ENCODE measurements at regions of chr6 and their contacts with region 1.

Region 1: DNA sequence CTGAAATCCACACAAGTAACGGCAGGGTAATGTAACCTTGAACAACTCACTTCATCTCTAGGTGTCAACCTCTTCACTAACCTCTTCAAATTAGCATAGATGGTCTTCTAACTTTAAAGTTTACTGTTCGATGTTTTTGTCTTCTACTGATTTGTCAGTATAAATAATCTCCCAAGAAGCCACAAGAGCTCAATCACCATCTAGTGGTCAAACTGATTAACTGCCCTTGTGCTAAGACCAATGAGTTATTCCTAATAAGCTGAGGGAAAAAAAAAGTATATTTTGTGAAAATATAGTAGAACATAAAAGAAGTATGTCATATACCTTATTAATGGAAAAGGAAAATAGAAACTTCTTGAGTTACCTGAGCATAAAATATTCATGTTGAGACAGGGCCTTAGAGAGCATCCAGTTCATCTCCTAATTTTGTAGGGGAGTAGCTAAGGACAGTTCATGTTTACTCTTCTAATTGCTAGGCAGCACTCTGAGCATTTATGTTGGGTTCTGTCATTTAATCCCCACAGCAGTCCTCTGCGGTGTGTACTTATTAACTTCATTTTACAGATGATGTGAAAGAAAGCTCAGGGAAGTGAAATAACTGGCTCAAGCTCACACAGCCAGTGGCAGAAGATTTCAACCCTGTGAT is 317.1 kb downstream of the ESR1 start:
- DNase-seq: no peak
- H3K4me3 ChIP-seq: no peak overlapping the region
- CTCF ChIP-seq: peak; percentile 58

Region 2: GRCh38 chr6:151958331-151958730 is 166.2 kb before region 1 on chr6:
- CTCF ChIA-PET with region 1: interaction called, 10 read pairs
- POLR2A ChIA-PET with region 1: no interaction called
- DNase-seq: no peak
- H3K4me3 ChIP-seq: no peak overlapping the region
- CTCF ChIP-seq: no peak

Region 3: GRCh38 chr6:152136453-152136825 is 11.9 kb after region 1 on chr6:
- CTCF ChIA-PET with region 1: interaction called, 13 read pairs
- POLR2A ChIA-PET with region 1: no interaction called
- DNase-seq: no peak
- H3K4me3 ChIP-seq: no peak overlapping the region
- CTCF ChIP-seq: no peak

Region 4: DNA sequence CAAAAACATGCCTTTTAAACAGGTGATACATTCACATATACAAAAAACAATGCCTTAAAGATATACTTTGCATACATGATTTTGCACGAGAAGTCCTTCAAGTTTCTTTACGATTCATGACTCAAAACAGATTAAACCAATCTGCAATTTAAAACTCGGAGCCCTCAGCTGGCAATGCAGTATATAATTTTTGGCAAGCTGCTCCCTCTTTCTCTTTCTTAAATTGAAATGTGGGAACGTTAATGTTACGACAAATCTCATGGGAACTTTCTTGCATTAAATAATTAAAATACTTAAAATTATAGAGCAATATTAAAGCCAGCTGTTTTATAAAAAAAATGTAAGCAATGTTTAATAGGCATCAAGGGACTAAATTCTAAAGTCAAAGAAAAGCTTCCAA is 17.6 kb after region 1 on chr6:
- CTCF ChIA-PET with region 1: interaction called, 13 read pairs
- POLR2A ChIA-PET with region 1: no interaction called
- DNase-seq: no peak
- H3K4me3 ChIP-seq: no peak overlapping the region
- CTCF ChIP-seq: no peak